ENCODE measurements at regions of chr3 and their contacts with region 1.

Region 1: GRCh38 chr3:112973325-112974177 is 1.4 kb downstream of the CD200R1 start:
- DNase-seq: peak; percentile 69
- ATAC-seq: peak; percentile 87
- H3K4me3 Mint-ChIP-seq: peak overlapping the region; percentile 73
- H3K27ac Mint-ChIP-seq: peak overlapping the region; percentile 91
- H3K4me1 Mint-ChIP-seq: peaks cover 87% of the 10 kb centered on the region
- H3K27me3 Mint-ChIP-seq: peaks cover 2% of the 10 kb centered on the region

Region 2: DNA sequence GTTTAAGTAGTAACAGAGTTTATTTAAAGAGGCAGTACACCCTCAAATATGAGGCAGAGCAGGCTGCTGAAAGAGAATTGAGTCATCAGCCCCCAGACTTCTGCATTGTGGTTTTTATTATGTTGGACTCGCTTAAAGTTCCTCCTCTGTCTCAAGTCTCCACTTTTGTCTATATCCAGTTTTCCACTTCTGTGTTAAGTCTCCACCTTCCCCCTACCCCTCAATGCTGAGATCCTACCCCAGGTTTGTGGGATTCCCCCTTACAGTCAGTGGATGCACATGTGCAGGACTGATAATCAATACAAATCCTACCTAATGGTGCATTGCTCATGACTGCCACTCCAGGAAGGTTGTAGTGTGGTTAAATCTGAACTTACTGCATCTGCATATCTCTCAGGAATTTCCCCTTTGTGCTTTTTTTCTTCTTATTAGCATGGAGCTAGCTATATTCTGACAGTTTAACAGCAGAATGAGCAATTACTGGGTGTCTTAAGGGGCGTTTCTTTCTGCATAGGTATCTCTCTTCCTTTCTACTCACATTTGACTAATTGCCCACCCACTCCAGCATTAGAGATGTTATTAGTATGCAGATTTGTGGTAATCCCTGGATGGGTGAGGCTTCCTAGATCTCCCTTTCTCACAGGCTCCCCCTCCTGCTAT is 115.0 kb before region 1 on chr3:
- CTCF ChIA-PET with region 1: no interaction called
- POLR2A ChIA-PET with region 1: no interaction called
- intact Hi-C with region 1: loop called (anchors 1 to 5 kb)
- DNase-seq: peak; percentile 20
- ATAC-seq: peak; percentile 95
- H3K4me3 Mint-ChIP-seq: no peak overlapping the region
- H3K27ac Mint-ChIP-seq: peak overlapping the region; percentile 45
- H3K4me1 Mint-ChIP-seq: peaks cover 25% of the 10 kb centered on the region
- H3K27me3 Mint-ChIP-seq: no peaks in the 10 kb centered on the region

Region 3: DNA sequence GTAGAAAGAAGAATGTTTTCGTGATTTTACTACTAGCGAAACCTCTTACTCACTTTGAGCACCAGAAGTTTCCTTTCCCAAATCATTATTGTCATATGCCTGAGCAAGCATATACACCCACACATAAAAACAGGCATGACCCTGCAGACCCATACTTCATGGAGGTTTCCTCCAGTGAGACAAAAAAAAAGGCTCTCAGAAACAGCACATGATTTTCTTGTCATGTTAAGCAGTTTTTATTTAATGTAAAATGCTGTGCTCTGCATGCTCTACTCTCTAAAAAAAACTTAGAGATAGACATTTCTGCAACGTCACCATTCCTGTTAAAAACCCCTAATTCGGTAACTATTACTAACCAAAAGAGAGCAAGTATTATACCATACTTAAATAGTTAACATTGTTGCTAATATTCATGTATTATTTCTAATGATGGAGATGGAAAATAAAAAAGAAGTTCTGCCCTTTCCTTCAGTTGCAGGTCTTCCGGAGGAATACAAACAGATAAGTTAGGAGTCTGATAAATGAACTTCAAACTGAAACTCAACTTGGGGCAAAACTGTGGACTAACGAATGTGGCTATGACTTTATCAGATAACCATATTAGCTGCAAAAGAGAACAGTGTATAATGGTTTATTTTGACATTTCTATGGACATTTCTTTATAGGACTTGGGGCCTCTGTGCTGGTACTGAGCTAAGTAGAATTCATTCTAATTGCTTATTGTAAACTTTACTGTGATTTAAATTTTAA is 14.6 kb before region 1 on chr3:
- CTCF ChIA-PET with region 1: interaction called, 15 read pairs
- POLR2A ChIA-PET with region 1: no interaction called
- intact Hi-C with region 1: loop called (anchors 1 kb)
- DNase-seq: peak; percentile 36
- ATAC-seq: peak; percentile 97
- H3K4me3 Mint-ChIP-seq: peak overlapping the region; percentile 66
- H3K27ac Mint-ChIP-seq: peak overlapping the region; percentile 80
- H3K4me1 Mint-ChIP-seq: peaks cover 37% of the 10 kb centered on the region
- H3K27me3 Mint-ChIP-seq: no peaks in the 10 kb centered on the region

Region 4: GRCh38 chr3:112984485-112984884 is 10.9 kb after region 1 on chr3:
- CTCF ChIA-PET with region 1: interaction called, 48 read pairs
- POLR2A ChIA-PET with region 1: no interaction called
- intact Hi-C with region 1: no loop called
- DNase-seq: peak; percentile 48
- ATAC-seq: peak; percentile 57
- H3K4me3 Mint-ChIP-seq: no peak overlapping the region
- H3K27ac Mint-ChIP-seq: no peak overlapping the region
- H3K4me1 Mint-ChIP-seq: peaks cover 58% of the 10 kb centered on the region
- H3K27me3 Mint-ChIP-seq: no peaks in the 10 kb centered on the region

Region 5: DNA sequence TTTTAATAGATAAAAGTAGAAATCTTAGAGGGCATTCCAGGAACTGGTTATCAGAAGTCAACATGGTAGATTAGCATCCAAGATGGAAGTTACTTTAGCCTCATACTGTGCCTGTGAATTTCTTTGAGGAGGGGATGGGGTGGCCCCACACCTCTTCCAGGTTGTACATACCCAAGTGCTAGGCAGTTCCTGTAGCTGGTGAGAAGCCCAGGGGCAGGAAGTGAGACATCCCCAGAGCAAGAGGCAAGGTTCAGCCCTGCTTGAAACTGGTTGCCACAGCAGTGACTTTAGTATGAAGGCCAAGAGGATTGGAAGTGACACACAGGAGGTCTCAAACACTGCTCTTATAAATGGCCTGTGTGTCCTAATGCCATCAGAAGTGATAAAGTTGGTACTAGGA is 29.1 kb after region 1 on chr3:
- CTCF ChIA-PET with region 1: interaction called, 6 read pairs
- POLR2A ChIA-PET with region 1: no interaction called
- intact Hi-C with region 1: loop called (anchors 1 to 5 kb)
- DNase-seq: peak; percentile 77
- ATAC-seq: peak; percentile 77
- H3K4me3 Mint-ChIP-seq: no peak overlapping the region
- H3K27ac Mint-ChIP-seq: peak overlapping the region; percentile 89
- H3K4me1 Mint-ChIP-seq: peaks cover 83% of the 10 kb centered on the region
- H3K27me3 Mint-ChIP-seq: no peaks in the 10 kb centered on the region

Measured in activated CD4-positive, alpha-beta T cell treated with anti-CD3 and anti-CD28 coated beads for 36 hours (primary cell).